Gastrocnemius medialis (tissue), 4 donors: ENCODE measurements at regions of chr3 and their contacts with region 1.

Region 1: GRCh38 chr3:140922634-140923033 is 19.0 kb upstream of the SLC25A36 start:
- DNase-seq: no peak
- ATAC-seq: no peak
- H3K4me3 ChIP-seq: no peak overlapping the region
- H3K27ac ChIP-seq: no peak overlapping the region
- H3K4me1 ChIP-seq: peaks cover 19 to 23% of the 10 kb centered on the region in 2 donors
- H3K27me3 ChIP-seq: no peaks in the 10 kb centered on the region
- CTCF ChIP-seq: peak in 3 of 5 experiments; percentile 26 to 48 (median 40)
- POLR2A ChIP-seq: no peak

Region 2: DNA sequence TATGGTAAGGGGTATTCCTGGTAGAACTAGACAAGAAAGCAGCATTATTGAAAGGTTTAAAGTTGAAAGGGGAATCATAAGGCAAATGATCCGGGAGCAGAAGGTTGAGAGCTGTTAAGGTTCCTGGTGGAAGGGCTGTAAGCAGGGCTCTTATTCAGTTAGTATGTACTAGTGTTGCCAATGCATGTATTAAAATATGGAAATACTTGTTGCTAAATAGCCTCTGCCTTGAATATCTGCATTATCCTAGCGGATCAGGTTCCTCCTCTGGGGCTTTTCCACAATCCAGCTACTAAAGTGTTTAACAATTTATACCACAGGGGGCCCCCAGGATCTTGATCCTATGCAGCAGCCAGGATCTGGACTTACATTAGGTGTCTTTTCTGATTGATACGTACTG is 1525.9 kb before region 1 on chr3:
- in situ Hi-C with region 1: no loop called
- intact Hi-C with region 1: no loop called
- DNase-seq: no peak
- ATAC-seq: no peak
- H3K4me3 ChIP-seq: no peak overlapping the region
- H3K27ac ChIP-seq: no peak overlapping the region
- H3K4me1 ChIP-seq: peaks cover 12 to 13% of the 10 kb centered on the region in 2 donors
- H3K27me3 ChIP-seq: no peaks in the 10 kb centered on the region
- CTCF ChIP-seq: no peak
- POLR2A ChIP-seq: no peak

Region 3: GRCh38 chr3:140186421-140186920 is 736.2 kb before region 1 on chr3:
- in situ Hi-C with region 1: no loop called
- intact Hi-C with region 1: no loop called
- DNase-seq: peak in 1 of 2 donors; percentile 9
- ATAC-seq: peak; percentile 95 to 97
- H3K4me3 ChIP-seq: no peak overlapping the region
- H3K27ac ChIP-seq: peak overlapping the region; percentile 46 to 75 (median 60)
- H3K4me1 ChIP-seq: peaks cover 31 to 44% of the 10 kb centered on the region in 2 donors
- H3K27me3 ChIP-seq: no peaks in the 10 kb centered on the region
- CTCF ChIP-seq: no peak
- POLR2A ChIP-seq: no peak

Region 4: GRCh38 chr3:140416666-140417065 is 506.0 kb before region 1 on chr3:
- in situ Hi-C with region 1: no loop called
- intact Hi-C with region 1: no loop called
- DNase-seq: no peak
- ATAC-seq: no peak
- H3K4me3 ChIP-seq: no peak overlapping the region
- H3K27ac ChIP-seq: no peak overlapping the region
- H3K4me1 ChIP-seq: no peaks in the 10 kb centered on the region
- H3K27me3 ChIP-seq: no peaks in the 10 kb centered on the region
- CTCF ChIP-seq: no peak
- POLR2A ChIP-seq: no peak

Region 5: DNA sequence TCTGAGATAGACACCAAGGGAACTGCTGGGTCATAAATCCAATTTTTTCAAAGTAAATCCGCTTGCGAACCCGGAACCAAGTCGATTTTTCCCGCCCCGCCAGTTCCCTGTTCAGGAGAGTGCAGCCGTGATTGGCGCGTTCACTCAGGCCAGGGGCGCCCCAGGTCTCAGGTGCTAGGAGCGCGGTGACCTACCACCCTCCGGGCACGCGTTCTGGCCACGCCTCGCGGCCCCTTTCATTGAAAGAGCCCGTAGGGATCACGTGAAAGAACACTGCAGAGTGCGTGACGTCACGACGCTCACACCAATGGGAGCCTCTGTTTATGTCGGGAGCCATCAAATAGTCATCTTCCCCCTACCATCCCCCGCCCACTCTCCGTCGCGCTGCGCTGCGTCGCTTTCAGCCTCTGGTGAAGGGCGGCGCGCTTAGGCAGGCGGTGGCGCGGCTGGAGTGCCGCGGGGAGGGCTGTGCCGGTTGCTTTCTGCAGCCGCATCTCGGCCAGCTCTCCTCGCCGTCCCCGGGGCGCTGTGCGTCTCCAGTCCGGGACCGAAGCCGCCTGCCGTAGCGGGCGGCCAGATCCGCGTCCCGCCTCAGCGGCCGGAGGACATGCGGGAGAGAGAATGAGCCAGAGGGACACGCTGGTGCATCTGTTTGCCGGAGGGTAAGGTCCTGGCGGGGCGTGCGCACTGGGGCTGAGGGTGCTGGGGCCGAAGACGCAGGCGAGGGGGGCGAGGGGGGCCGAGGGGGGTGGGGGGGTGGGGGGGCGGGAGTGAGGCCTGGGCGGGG is 19.0 kb after region 1 on chr3 and contains the start of gene SLC25A36:
- in situ Hi-C with region 1: no loop called
- intact Hi-C with region 1: loop called (anchors 2 kb)
- DNase-seq: peak; percentile 96 to 97
- ATAC-seq: peak; percentile 99
- H3K4me3 ChIP-seq: peak within 1 kb of the TSS; percentile 66 to 97 (median 94)
- H3K27ac ChIP-seq: peak within 1 kb of the TSS; percentile 97 to 99 (median 99)
- H3K4me1 ChIP-seq: peaks cover 36 to 38% of the 10 kb centered on the region in 2 donors
- H3K27me3 ChIP-seq: no peaks in the 10 kb centered on the region
- CTCF ChIP-seq: peak in 1 of 5 experiments; percentile 30
- POLR2A ChIP-seq: peak; percentile 96 to 98
- total RNA-seq, gene SLC25A36: 17.3 to 74.7 (median 35.0) TPM

Region 6: GRCh38 chr3:140953028-140953960 is 30.7 kb after region 1 on chr3:
- in situ Hi-C with region 1: no loop called
- intact Hi-C with region 1: loop called (anchors 2 kb)
- DNase-seq: no peak
- ATAC-seq: peak; percentile 79 to 86
- H3K4me3 ChIP-seq: no peak overlapping the region
- H3K27ac ChIP-seq: peak overlapping the region; percentile 57 to 78 (median 66)
- H3K4me1 ChIP-seq: peaks cover 49 to 85% of the 10 kb centered on the region in 2 donors
- H3K27me3 ChIP-seq: no peaks in the 10 kb centered on the region
- CTCF ChIP-seq: no peak
- POLR2A ChIP-seq: no peak

Region 7: DNA sequence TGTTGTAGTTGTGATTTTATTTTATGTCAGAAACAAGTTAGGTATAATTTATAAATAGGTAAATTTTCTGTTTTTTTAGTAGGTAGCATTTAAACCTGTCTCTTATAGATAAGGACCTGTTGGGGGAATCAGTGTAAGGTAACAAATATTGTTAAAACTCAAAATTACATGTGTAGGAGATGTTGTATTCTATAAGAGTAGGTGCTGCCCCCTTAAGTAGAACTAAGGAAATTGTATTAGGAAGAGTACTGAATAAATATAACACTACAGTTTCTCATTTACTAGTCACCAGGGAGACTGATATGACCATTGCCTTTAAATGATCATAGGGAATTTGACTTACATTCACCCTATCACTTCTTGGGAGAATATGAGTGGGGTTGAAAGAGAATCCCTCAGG is 50.2 kb after region 1 on chr3:
- in situ Hi-C with region 1: no loop called
- intact Hi-C with region 1: loop called (anchors 5 kb)
- DNase-seq: no peak
- ATAC-seq: no peak
- H3K4me3 ChIP-seq: no peak overlapping the region
- H3K27ac ChIP-seq: no peak overlapping the region
- H3K4me1 ChIP-seq: no peaks in the 10 kb centered on the region
- H3K27me3 ChIP-seq: no peaks in the 10 kb centered on the region
- CTCF ChIP-seq: peak in 2 of 5 experiments; percentile 27 to 37
- POLR2A ChIP-seq: no peak